B cell (primary cell): ENCODE measurements at regions of chr17 and their contacts with region 1.

Region 1: GRCh38 chr17:82767041-82767754 is 15.3 kb downstream of the TBCD start:
- DNase-seq: peak; percentile 50
- ATAC-seq: no peak
- H3K4me3 ChIP-seq: no peak overlapping the region
- H3K4me3 Mint-ChIP-seq: no peak overlapping the region
- H3K27ac ChIP-seq: no peak overlapping the region
- H3K27ac Mint-ChIP-seq: no peak overlapping the region
- H3K4me1 ChIP-seq: peaks cover 8 to 9% of the 10 kb centered on the region in 2 donors
- H3K4me1 Mint-ChIP-seq: peaks cover 15% of the 10 kb centered on the region
- H3K27me3 ChIP-seq: no peaks in the 10 kb centered on the region
- H3K27me3 Mint-ChIP-seq: no peaks in the 10 kb centered on the region
- CTCF ChIP-seq: peak; percentile 48

Region 2: GRCh38 chr17:82668631-82669099 is 98.5 kb before region 1 on chr17:
- CTCF ChIA-PET with region 1: interaction called, 11 read pairs
- POLR2A ChIA-PET with region 1: no interaction called
- intact Hi-C with region 1: no loop called
- DNase-seq: peak; percentile 66
- ATAC-seq: peak; percentile 91
- H3K4me3 ChIP-seq: peak overlapping the region in 2 of 5 experiments; percentile 19 to 36
- H3K4me3 Mint-ChIP-seq: peak overlapping the region; percentile 65
- H3K27ac ChIP-seq: no peak overlapping the region
- H3K27ac Mint-ChIP-seq: no peak overlapping the region
- H3K4me1 ChIP-seq: peaks cover 0 to 6% of the 10 kb centered on the region in 2 donors
- H3K4me1 Mint-ChIP-seq: peaks cover 6% of the 10 kb centered on the region
- H3K27me3 ChIP-seq: no peaks in the 10 kb centered on the region
- H3K27me3 Mint-ChIP-seq: no peaks in the 10 kb centered on the region
- CTCF ChIP-seq: peak; percentile 59

Region 3: DNA sequence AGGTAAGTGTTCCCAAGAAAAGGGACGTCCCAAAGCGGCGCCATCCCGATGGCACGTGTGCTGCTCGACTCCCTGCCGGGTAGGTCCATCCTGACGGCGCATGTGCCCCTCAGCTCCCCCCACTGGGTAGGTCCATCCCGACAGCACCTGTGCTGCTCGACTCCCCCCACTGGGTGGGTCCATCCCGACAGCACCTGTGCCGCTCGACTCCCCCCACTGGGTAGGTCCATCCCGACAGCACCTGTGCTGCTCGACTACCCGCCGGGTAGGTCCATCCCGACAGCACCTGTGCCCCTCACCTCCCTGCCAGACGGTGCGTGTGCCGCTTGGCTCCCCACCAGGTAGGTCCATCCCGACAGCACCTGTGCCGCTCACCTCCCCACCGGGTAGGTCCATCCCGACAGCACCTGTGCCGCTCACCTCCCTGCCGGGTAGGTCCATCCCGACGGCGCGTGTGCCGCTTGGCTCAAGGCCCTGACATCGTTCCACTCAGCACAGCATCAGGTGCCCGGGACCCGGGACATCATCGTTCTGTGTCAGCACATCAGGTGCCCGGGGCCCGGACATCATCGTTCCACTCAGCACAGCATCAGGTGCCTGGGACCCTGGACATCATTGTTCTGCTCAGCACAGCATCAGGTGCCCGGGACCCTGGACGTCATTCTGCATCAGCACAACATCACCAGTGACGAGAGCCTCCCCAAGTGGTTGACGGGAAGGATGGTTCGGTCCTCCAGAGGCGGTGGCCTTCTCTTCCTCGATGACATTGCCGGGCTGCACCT is 37.5 kb before region 1 on chr17:
- CTCF ChIA-PET with region 1: no interaction called
- POLR2A ChIA-PET with region 1: no interaction called
- intact Hi-C with region 1: no loop called
- DNase-seq: no peak
- ATAC-seq: no peak
- H3K4me3 ChIP-seq: no peak overlapping the region
- H3K4me3 Mint-ChIP-seq: no peak overlapping the region
- H3K27ac ChIP-seq: no peak overlapping the region
- H3K27ac Mint-ChIP-seq: no peak overlapping the region
- H3K4me1 ChIP-seq: no peaks in the 10 kb centered on the region
- H3K4me1 Mint-ChIP-seq: no peaks in the 10 kb centered on the region
- H3K27me3 ChIP-seq: no peaks in the 10 kb centered on the region
- H3K27me3 Mint-ChIP-seq: no peaks in the 10 kb centered on the region
- CTCF ChIP-seq: no peak